ENCODE measurements at regions of chr11 and their contacts with region 1.

Region 1: GRCh38 chr11:61792310-61793085 is at the starts of genes FEN1 and TMEM258:
- DNase-seq: peak; percentile 91
- ATAC-seq: peak; percentile 86
- H3K4me3 ChIP-seq: peak within 1 kb of the TSS; percentile 68 to 87 (median 81)
- H3K27ac ChIP-seq: peak within 1 kb of the TSS; percentile 99
- H3K4me1 ChIP-seq: peaks cover 49% of the 10 kb centered on the region
- H3K27me3 ChIP-seq: no peaks in the 10 kb centered on the region; a peak in 1 of 5 replicates
- CTCF ChIP-seq: no peak
- EP300 ChIP-seq: no peak
- POLR2A ChIP-seq: peak; percentile 79 to 89
- RAD21 ChIP-seq: no peak
- total RNA-seq, gene FEN1: 102 and 116 TPM in 2 replicates
- total RNA-seq, gene TMEM258: 164 and 175 TPM in 2 replicates

Region 2: GRCh38 chr11:61747192-61747966 is 45.1 kb before region 1 on chr11:
- CTCF ChIA-PET with region 1: interaction called, 24 read pairs
- POLR2A ChIA-PET with region 1: interaction called, 43 read pairs
- in situ Hi-C with region 1: no loop called
- intact Hi-C with region 1: loop called (anchors 1 kb)
- DNase-seq: peak; percentile 67
- ATAC-seq: peak; percentile 85
- H3K4me3 ChIP-seq: peak overlapping the region; percentile 22 to 68 (median 43)
- H3K27ac ChIP-seq: no peak overlapping the region
- H3K4me1 ChIP-seq: peaks cover 54% of the 10 kb centered on the region
- H3K27me3 ChIP-seq: no peaks in the 10 kb centered on the region
- CTCF ChIP-seq: peak; percentile 99
- EP300 ChIP-seq: no peak
- POLR2A ChIP-seq: no peak
- RAD21 ChIP-seq: peak; percentile 97

Region 3: GRCh38 chr11:61769169-61769920 is 23.2 kb before region 1 on chr11:
- CTCF ChIA-PET with region 1: no interaction called
- POLR2A ChIA-PET with region 1: interaction called, 20 read pairs
- in situ Hi-C with region 1: no loop called
- intact Hi-C with region 1: no loop called
- DNase-seq: peak; percentile 90
- ATAC-seq: peak; percentile 90
- H3K4me3 ChIP-seq: peak overlapping the region; percentile 46 to 66 (median 56); a peak in 5 of 6 replicates
- H3K27ac ChIP-seq: peak overlapping the region; percentile 91
- H3K4me1 ChIP-seq: peaks cover 81% of the 10 kb centered on the region
- H3K27me3 ChIP-seq: no peaks in the 10 kb centered on the region; a peak in 1 of 5 replicates
- CTCF ChIP-seq: peak; percentile 85
- EP300 ChIP-seq: peak; percentile 58 to 83; a peak in 3 of 4 replicates
- POLR2A ChIP-seq: peak in 1 of 2 experiments; percentile 30; a peak in 1 of 4 replicates
- RAD21 ChIP-seq: peak; percentile 91

Region 4: DNA sequence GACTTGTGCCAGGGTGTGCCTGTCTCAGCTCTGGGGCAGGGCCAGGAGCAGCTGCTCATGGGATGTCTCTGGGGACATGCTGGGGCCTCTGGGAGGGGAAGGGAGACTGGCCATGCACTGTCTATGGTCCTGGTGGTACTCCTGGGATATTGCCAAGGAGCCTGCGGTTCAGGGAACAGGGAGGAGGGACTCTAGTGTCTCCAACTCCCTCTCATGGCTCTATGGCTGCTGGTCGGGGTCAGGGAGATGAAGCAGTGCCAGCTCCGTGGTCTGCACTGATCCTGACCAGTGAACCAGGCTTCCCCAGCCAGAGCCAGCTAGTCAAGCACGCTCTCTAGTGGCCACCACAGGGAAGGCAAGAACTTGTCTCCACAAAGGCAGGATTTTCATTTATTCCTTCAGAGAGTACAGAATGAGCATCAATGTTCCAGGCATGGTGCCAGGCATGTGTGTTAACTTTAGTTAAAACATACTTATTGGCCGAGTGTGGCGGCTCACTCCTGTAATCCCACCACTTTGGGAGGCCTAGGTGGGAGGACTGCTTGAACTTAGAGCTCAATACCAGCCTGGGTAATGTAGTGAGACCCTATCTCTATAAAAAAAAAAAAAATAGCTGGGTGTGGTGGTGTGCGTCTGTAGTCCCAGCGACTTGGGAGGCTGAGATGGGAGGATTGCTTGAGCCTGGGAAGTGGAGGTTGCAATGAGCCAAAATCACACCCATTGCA is 155.2 kb after region 1 on chr11:
- CTCF ChIA-PET with region 1: interaction called, 6 read pairs
- POLR2A ChIA-PET with region 1: interaction called, 11 read pairs
- in situ Hi-C with region 1: no loop called
- intact Hi-C with region 1: loop called (anchors 2 kb)
- DNase-seq: peak; percentile 73
- ATAC-seq: peak; percentile 85
- H3K4me3 ChIP-seq: no peak overlapping the region
- H3K27ac ChIP-seq: no peak overlapping the region
- H3K4me1 ChIP-seq: peaks cover 21% of the 10 kb centered on the region; the same call in 1 of the 2 replicates
- H3K27me3 ChIP-seq: peaks cover 1 to 19% of the 10 kb centered on the region in 2 experiments; a peak in 3 of 5 replicates
- CTCF ChIP-seq: peak; percentile 97
- EP300 ChIP-seq: no peak
- POLR2A ChIP-seq: no peak
- RAD21 ChIP-seq: peak; percentile 99

Region 5: GRCh38 chr11:62108017-62108750 is 315.7 kb after region 1 on chr11:
- CTCF ChIA-PET with region 1: interaction called, 3 read pairs
- POLR2A ChIA-PET with region 1: interaction called, 4 read pairs
- in situ Hi-C with region 1: no loop called
- intact Hi-C with region 1: loop called (anchors 1 kb)
- DNase-seq: peak; percentile 65
- ATAC-seq: peak; percentile 73
- H3K4me3 ChIP-seq: no peak overlapping the region
- H3K27ac ChIP-seq: no peak overlapping the region
- H3K4me1 ChIP-seq: peaks cover 30% of the 10 kb centered on the region
- H3K27me3 ChIP-seq: peaks cover 0 to 6% of the 10 kb centered on the region in 2 experiments; a peak in 2 of 5 replicates
- CTCF ChIP-seq: peak; percentile 84
- EP300 ChIP-seq: no peak
- POLR2A ChIP-seq: no peak
- RAD21 ChIP-seq: peak; percentile 76

Measured in HepG2 (cell line).